ENCODE measurements at regions of chr21 and their contacts with region 1.

Region 1: GRCh38 chr21:37463083-37463801 is 96.7 kb downstream of the DYRK1A start:
- DNase-seq: peak; percentile 80
- ATAC-seq: peak; percentile 80
- H3K4me3 ChIP-seq: peak overlapping the region; percentile 24; the same call in 1 of the 2 replicates
- H3K27ac ChIP-seq: no peak overlapping the region; the same call in 1 of the 2 replicates
- H3K4me1 ChIP-seq: peaks cover 18% of the 10 kb centered on the region
- H3K27me3 ChIP-seq: no peaks in the 10 kb centered on the region
- CTCF ChIP-seq: peak; percentile 75
- POLR2A ChIP-seq: no peak
- RAD21 ChIP-seq: peak; percentile 49

Region 2: DNA sequence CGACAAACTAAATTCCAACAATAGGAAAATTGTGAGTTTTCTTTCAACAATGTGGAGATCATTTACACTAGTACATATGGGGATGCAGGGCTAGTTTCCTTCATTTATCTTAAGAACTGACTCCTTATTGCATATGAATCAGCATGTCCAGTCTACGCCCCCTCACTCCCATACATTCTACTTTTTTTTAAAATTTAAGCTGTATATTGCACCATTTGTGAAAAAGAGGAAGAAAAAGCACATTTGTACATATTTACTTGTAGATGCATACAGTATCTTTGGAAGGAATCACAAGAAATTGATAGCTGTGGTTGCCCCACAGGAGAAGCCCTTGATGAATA is 212.0 kb before region 1 on chr21:
- CTCF ChIA-PET with region 1: no interaction called
- POLR2A ChIA-PET with region 1: no interaction called
- dilution Hi-C with region 1: no loop called
- in situ Hi-C with region 1: loop called (anchors 25 kb)
- intact Hi-C with region 1: loop called (anchors 2 kb)
- DNase-seq: no peak
- ATAC-seq: peak; percentile 52
- H3K4me3 ChIP-seq: no peak overlapping the region
- H3K27ac ChIP-seq: no peak overlapping the region; the same call in 1 of the 2 replicates
- H3K4me1 ChIP-seq: peaks cover 9% of the 10 kb centered on the region
- H3K27me3 ChIP-seq: no peaks in the 10 kb centered on the region
- CTCF ChIP-seq: no peak
- POLR2A ChIP-seq: no peak
- RAD21 ChIP-seq: no peak

Region 3: GRCh38 chr21:37267269-37268184 is 195.7 kb before region 1 on chr21 and contains the start of gene VPS26C:
- CTCF ChIA-PET with region 1: no interaction called
- POLR2A ChIA-PET with region 1: interaction called, 3 read pairs
- dilution Hi-C with region 1: no loop called
- in situ Hi-C with region 1: loop called (anchors 25 kb)
- intact Hi-C with region 1: loop called (anchors 5 kb)
- DNase-seq: peak; percentile 99
- ATAC-seq: peak; percentile 93
- H3K4me3 ChIP-seq: peak within 1 kb of the TSS; percentile 69
- H3K27ac ChIP-seq: peak within 1 kb of the TSS; percentile 93
- H3K4me1 ChIP-seq: peaks cover 3% of the 10 kb centered on the region; the same call in 1 of the 2 replicates
- H3K27me3 ChIP-seq: no peaks in the 10 kb centered on the region
- CTCF ChIP-seq: 0 out of 2 replicates have a peak, but pooled peaks have one; percentile 2
- POLR2A ChIP-seq: peak; percentile 97
- RAD21 ChIP-seq: peak; percentile 16; the same call in 1 of the 2 replicates
- total RNA-seq, gene VPS26C: 30.0 and 36.6 TPM in 2 replicates

Region 4: DNA sequence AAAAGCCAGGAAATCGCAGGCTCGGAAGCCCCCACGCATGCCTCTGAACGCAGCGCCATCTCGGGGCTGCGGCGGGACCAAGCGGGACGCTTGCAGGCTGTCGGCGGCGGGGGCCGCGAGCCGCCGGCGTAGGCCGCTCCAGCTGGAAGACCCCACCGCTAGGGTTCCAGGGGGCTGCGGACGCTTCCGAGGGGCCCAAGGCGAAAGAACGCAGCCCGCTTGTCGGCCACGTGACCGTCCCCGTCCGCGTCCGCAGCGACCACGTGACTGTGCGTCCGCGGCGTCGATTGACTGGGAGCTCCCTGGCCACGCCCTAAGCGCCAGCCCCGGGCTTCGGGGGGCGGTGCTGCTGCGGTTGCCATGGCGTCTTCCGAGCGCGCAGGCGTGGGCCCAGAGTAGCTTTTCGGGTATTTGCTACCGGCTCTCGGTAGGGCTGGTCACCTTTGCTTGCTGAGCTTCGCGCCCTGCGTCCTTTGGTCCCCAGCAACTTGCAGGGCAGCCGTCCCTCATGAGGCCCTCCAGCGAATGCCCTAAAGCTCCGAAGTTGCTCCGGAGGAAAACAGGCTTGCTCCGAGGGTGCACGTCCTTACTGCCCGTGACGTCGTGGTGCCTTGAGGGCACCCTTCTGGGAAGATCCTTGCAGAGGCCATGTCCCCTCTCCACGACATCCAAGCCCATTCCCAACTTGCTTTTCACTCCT is 100.5 kb after region 1 on chr21:
- CTCF ChIA-PET with region 1: no interaction called
- POLR2A ChIA-PET with region 1: no interaction called
- dilution Hi-C with region 1: no loop called
- in situ Hi-C with region 1: no loop called
- intact Hi-C with region 1: loop called (anchors 1 kb)
- DNase-seq: peak; percentile 92
- ATAC-seq: peak; percentile 91
- H3K4me3 ChIP-seq: peak overlapping the region; percentile 48
- H3K27ac ChIP-seq: peak overlapping the region; percentile 72
- H3K4me1 ChIP-seq: peaks cover 9% of the 10 kb centered on the region
- H3K27me3 ChIP-seq: no peaks in the 10 kb centered on the region
- CTCF ChIP-seq: peak; percentile 39
- POLR2A ChIP-seq: peak; percentile 62
- RAD21 ChIP-seq: no peak

Region 5: DNA sequence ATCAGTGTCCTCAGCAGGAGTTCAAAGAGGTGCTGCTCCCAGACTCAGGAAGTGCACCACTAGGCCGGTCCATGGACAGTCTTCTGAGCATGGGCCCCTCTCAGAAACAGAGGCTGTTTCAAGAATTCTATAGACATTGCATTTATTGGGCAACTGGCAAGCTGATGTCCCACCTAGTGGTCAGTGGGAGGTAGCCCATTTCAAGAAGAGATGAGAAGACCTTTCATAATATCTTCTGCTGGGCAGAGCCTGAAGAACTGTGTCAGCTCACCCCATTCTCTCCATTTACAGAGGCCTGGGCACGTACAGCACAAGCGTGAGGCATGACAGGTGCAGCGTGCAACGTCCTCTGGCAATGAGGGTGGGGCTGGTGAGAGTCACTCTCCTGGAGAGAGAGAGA is 119.3 kb after region 1 on chr21:
- CTCF ChIA-PET with region 1: no interaction called
- POLR2A ChIA-PET with region 1: no interaction called
- dilution Hi-C with region 1: no loop called
- in situ Hi-C with region 1: no loop called
- intact Hi-C with region 1: loop called (anchors 2 kb)
- DNase-seq: peak; percentile 77
- ATAC-seq: peak; percentile 98
- H3K4me3 ChIP-seq: no peak overlapping the region
- H3K27ac ChIP-seq: no peak overlapping the region
- H3K4me1 ChIP-seq: no peaks in the 10 kb centered on the region
- H3K27me3 ChIP-seq: peaks cover 2% of the 10 kb centered on the region; the same call in 1 of the 2 replicates
- CTCF ChIP-seq: peak; percentile 85
- POLR2A ChIP-seq: 0 out of 2 replicates have a peak, but pooled peaks have one; percentile 31
- RAD21 ChIP-seq: peak; percentile 94

Region 6: GRCh38 chr21:38853421-38853919 is 1390.2 kb after region 1 on chr21:
- CTCF ChIA-PET with region 1: no interaction called
- POLR2A ChIA-PET with region 1: no interaction called
- dilution Hi-C with region 1: no loop called
- in situ Hi-C with region 1: no loop called
- intact Hi-C with region 1: no loop called
- DNase-seq: peak; percentile 96
- ATAC-seq: no peak; the same call in 1 of the 2 replicates
- H3K4me3 ChIP-seq: no peak overlapping the region
- H3K27ac ChIP-seq: no peak overlapping the region
- H3K4me1 ChIP-seq: peaks cover 2% of the 10 kb centered on the region; the same call in 1 of the 2 replicates
- H3K27me3 ChIP-seq: no peaks in the 10 kb centered on the region
- CTCF ChIP-seq: no peak
- POLR2A ChIP-seq: no peak
- RAD21 ChIP-seq: no peak

Measured in IMR-90 (cell line).